Activated T-helper 2 cell treated with anti-CD3 and anti-CD28 coated beads, Interferon-gamma antibody, Interleukin-2, Interleukin-4, amounts not matched to agents 10 μg/mL and 5 μg/mL and 100 μg/mL, durations not matched to agents 14 hours and 24 hours and 36 hours (primary cell): ENCODE measurements at regions of chr10 and their contacts with region 1.

Region 1: GRCh38 chr10:43204943-43205671 is 61.8 kb downstream of the RASGEF1A start:
- DNase-seq: peak; percentile 30
- H3K4me3 Mint-ChIP-seq: no peak overlapping the region
- H3K27ac Mint-ChIP-seq: no peak overlapping the region
- H3K4me1 Mint-ChIP-seq: peaks cover 7% of the 10 kb centered on the region
- H3K27me3 Mint-ChIP-seq: no peaks in the 10 kb centered on the region

Region 2: DNA sequence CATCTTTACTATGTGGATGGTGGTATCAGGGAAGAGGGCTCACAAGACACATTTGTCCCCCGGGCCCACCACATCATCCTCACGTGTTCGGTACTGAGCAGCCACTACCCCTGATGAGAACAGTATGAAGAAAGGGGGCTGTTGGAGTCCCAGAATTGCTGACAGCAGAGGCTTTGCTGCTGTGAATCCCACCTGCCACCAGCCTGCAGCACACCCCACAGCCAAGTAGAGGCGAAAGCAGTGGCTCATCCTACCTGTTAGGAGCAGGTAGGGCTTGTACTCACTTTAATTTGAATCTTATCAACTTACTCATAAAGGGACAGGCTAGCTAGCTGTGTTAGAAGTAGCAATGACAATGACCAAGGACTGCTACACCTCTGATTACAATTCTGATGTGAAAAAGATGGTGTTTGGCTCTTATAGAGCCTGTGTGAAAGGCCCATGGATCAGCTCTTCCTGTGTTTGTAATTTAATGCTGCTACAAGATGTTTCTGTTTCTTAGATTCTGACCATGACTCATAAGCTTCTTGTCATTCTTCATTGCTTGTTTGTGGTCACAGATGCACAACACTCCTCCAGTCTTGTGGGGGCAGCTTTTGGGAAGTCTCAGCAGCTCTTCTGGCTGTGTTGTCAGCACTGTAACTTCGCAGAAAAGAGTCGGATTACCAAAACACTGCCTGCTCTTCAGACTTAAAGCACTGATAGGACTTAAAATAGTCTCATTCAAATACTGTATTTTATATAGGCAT is 76.0 kb before region 1 on chr10:
- intact Hi-C with region 1: no loop called
- DNase-seq: peak; percentile 32
- H3K4me3 Mint-ChIP-seq: no peak overlapping the region
- H3K27ac Mint-ChIP-seq: peak overlapping the region; percentile 86
- H3K4me1 Mint-ChIP-seq: peaks cover 46% of the 10 kb centered on the region
- H3K27me3 Mint-ChIP-seq: no peaks in the 10 kb centered on the region

Region 3: GRCh38 chr10:43229208-43230061 is 24.3 kb after region 1 on chr10:
- intact Hi-C with region 1: loop called (anchors 1 kb)
- DNase-seq: no peak
- H3K4me3 Mint-ChIP-seq: peak overlapping the region; percentile 66
- H3K27ac Mint-ChIP-seq: no peak overlapping the region
- H3K4me1 Mint-ChIP-seq: peaks cover 31% of the 10 kb centered on the region
- H3K27me3 Mint-ChIP-seq: peaks cover 42% of the 10 kb centered on the region

Region 4: GRCh38 chr10:43239771-43240170 is 34.7 kb after region 1 on chr10:
- intact Hi-C with region 1: no loop called
- DNase-seq: no peak
- H3K4me3 Mint-ChIP-seq: no peak overlapping the region
- H3K27ac Mint-ChIP-seq: no peak overlapping the region
- H3K4me1 Mint-ChIP-seq: no peaks in the 10 kb centered on the region
- H3K27me3 Mint-ChIP-seq: peaks cover 14% of the 10 kb centered on the region